Activated naive CD4-positive, alpha-beta T cell treated with anti-CD3 and anti-CD28 coated beads for 36 hours (primary cell): ENCODE measurements at regions of chr2 and their contacts with region 1.

Region 1: GRCh38 chr2:72862239-72862988 is 24.8 kb upstream of the SPR start:
- DNase-seq: peak; percentile 91
- H3K4me3 Mint-ChIP-seq: peak overlapping the region; percentile 31
- H3K27ac Mint-ChIP-seq: no peak overlapping the region
- H3K4me1 Mint-ChIP-seq: peaks cover 10% of the 10 kb centered on the region
- H3K27me3 Mint-ChIP-seq: peaks cover 49% of the 10 kb centered on the region

Region 2: DNA sequence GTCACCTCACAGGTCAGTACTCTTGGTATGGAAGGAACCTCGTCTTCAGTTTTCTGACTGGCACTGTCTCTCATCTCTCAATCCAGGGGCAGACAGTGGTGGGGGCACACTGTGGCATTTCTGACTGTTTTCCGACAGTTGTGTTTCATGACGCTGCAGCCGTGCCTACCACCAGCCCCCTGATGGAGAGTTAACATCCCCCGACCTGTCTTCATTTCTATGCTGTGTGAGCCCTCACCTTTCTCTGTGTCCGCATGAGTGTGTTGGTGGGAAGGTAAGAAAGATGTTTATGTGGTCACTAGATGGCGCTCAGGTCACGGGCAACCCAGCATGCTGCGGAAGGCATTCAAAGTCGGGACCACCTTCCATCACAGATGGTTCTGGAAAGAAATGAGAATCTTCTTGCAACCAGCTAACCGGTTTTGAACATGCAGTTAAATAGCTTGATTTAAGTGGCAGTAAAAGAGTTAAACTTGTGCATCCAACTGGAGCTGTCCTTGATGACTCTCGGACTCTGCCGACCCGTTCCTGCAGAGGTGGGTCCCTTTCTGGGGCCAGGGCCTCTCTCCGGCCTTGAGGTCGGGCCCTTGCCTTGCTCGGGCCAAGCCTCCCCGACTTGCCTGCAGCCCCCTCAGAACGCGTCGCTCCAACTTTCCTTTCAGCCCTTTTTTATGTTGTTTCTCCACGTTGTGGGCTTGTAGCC is 1316.7 kb before region 1 on chr2:
- CTCF ChIA-PET with region 1: no interaction called
- intact Hi-C with region 1: loop called (anchors 5 kb)
- DNase-seq: peak; percentile 64
- H3K4me3 Mint-ChIP-seq: peak overlapping the region; percentile 48
- H3K27ac Mint-ChIP-seq: no peak overlapping the region
- H3K4me1 Mint-ChIP-seq: peaks cover 11% of the 10 kb centered on the region
- H3K27me3 Mint-ChIP-seq: peaks cover 13% of the 10 kb centered on the region

Region 3: GRCh38 chr2:72150157-72150865 is 712.1 kb before region 1 on chr2:
- CTCF ChIA-PET with region 1: no interaction called
- intact Hi-C with region 1: loop called (anchors 5 kb)
- DNase-seq: peak; percentile 78
- H3K4me3 Mint-ChIP-seq: peak overlapping the region; percentile 77
- H3K27ac Mint-ChIP-seq: no peak overlapping the region
- H3K4me1 Mint-ChIP-seq: peaks cover 38% of the 10 kb centered on the region
- H3K27me3 Mint-ChIP-seq: peaks cover 60% of the 10 kb centered on the region

Region 4: GRCh38 chr2:72539071-72539552 is 323.3 kb before region 1 on chr2:
- CTCF ChIA-PET with region 1: no interaction called
- intact Hi-C with region 1: no loop called
- DNase-seq: no peak
- H3K4me3 Mint-ChIP-seq: no peak overlapping the region
- H3K27ac Mint-ChIP-seq: no peak overlapping the region
- H3K4me1 Mint-ChIP-seq: no peaks in the 10 kb centered on the region
- H3K27me3 Mint-ChIP-seq: no peaks in the 10 kb centered on the region

Region 5: GRCh38 chr2:72770879-72771461 is 91.4 kb before region 1 on chr2:
- CTCF ChIA-PET with region 1: interaction called, 26 read pairs
- intact Hi-C with region 1: loop called (anchors 1 kb)
- DNase-seq: peak; percentile 78
- H3K4me3 Mint-ChIP-seq: no peak overlapping the region
- H3K27ac Mint-ChIP-seq: no peak overlapping the region
- H3K4me1 Mint-ChIP-seq: no peaks in the 10 kb centered on the region
- H3K27me3 Mint-ChIP-seq: no peaks in the 10 kb centered on the region

Region 6: GRCh38 chr2:72846538-72847095 is 15.8 kb before region 1 on chr2:
- CTCF ChIA-PET with region 1: interaction called, 15 read pairs
- intact Hi-C with region 1: no loop called
- DNase-seq: no peak
- H3K4me3 Mint-ChIP-seq: no peak overlapping the region
- H3K27ac Mint-ChIP-seq: no peak overlapping the region
- H3K4me1 Mint-ChIP-seq: no peaks in the 10 kb centered on the region
- H3K27me3 Mint-ChIP-seq: peaks cover 9% of the 10 kb centered on the region

Region 7: DNA sequence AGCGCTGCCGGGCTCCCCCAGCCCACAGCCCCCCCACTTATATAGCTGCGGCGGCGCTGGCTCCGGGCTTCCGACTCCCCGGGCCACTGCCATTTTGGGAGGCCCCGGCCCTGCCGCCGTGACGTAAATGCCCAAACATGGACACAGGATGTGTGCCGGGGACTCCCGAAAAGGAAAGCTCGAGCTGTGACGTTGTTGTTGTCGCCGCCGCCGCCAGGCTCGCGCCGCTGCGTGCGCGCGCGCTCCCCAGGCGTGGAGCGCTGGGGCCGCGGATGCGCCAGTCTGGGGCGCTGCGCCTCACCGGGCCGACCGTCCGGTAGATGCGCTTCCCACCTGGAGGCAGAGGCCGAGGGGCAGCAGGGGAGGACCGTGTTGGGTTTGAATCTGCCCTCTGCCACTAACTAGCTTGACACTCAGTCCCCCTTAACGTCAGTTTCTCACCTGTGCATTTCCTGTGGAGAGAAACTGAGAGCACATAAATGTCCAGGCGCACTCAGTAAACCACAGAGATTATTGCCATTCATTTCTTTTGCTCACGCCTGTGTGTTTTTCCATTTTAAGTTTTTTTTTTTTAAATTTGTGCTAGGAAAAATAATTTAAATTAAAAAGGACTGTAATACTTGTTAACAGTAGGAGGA is 431.2 kb after region 1 on chr2 and contains the start of gene EGR4:
- CTCF ChIA-PET with region 1: no interaction called
- intact Hi-C with region 1: loop called (anchors 5 kb)
- DNase-seq: peak; percentile 94
- H3K4me3 Mint-ChIP-seq: peak within 1 kb of the TSS; percentile 73
- H3K27ac Mint-ChIP-seq: no peak within 1 kb of the TSS
- H3K4me1 Mint-ChIP-seq: peaks cover 14% of the 10 kb centered on the region
- H3K27me3 Mint-ChIP-seq: peaks cover 65% of the 10 kb centered on the region
- total RNA-seq, gene EGR4: 0.07 to 0.12 TPM